ENCODE measurements at regions of chr18 and their contacts with region 1.

Region 1: DNA sequence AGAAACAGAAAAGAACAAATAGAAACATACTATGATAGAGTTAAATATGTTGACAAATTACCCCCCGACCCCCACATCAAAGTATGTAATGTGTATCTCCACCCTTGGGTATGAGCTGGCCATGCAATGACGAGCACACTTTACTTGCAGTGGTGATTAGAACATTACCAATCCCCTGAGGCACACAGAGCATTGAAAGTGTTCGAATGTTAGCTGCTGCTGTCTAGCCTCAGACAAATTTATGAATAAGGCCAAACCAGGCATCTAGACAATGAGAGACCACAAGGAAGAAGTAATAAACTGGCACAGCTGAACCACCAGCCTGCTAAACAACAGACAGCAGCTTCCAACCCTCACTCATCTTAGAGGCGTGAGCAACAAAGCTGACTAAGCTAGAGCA is 380.5 kb downstream of the DSEL start:
- DNase-seq: no peak
- ATAC-seq: no peak
- H3K4me3 ChIP-seq: no peak overlapping the region
- H3K27ac ChIP-seq: no peak overlapping the region
- H3K4me1 ChIP-seq: no peaks in the 10 kb centered on the region
- H3K27me3 ChIP-seq: no peaks in the 10 kb centered on the region
- CTCF ChIP-seq: no peak

Region 2: DNA sequence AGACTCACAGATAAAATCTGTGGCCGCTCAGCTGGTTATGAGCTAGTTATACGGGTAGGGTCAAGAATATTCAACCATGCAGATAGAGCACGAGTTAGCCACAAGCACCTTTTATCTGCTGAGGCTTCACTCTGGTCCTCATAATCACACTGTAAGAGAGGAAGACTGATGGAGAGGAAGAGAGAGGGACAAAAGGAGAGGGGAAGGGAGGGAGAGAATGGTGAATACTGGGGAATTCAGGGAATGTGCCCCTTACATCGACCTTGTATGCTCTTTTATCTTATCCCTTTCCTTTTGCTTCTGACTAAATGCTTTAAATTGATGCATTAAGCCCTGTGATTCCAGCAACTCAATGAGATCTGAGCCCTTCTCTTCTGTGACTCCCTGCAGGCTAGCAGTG is 47.4 kb after region 1 on chr18:
- intact Hi-C with region 1: loop called in 1 of 10 experiments (anchors 1 kb)
- DNase-seq: no peak
- ATAC-seq: no peak
- H3K4me3 ChIP-seq: no peak overlapping the region
- H3K27ac ChIP-seq: no peak overlapping the region
- H3K4me1 ChIP-seq: no peaks in the 10 kb centered on the region
- H3K27me3 ChIP-seq: no peaks in the 10 kb centered on the region
- CTCF ChIP-seq: no peak

Measured in heart right ventricle (tissue), 16 donors.